GM10248 (cell line): ENCODE measurements at regions of chr4 and their contacts with region 1.

Region 1: GRCh38 chr4:127598656-127599055 is 34.1 kb upstream of the INTU start:
- DNase-seq: no peak
- CTCF ChIP-seq: no peak

Region 2: DNA sequence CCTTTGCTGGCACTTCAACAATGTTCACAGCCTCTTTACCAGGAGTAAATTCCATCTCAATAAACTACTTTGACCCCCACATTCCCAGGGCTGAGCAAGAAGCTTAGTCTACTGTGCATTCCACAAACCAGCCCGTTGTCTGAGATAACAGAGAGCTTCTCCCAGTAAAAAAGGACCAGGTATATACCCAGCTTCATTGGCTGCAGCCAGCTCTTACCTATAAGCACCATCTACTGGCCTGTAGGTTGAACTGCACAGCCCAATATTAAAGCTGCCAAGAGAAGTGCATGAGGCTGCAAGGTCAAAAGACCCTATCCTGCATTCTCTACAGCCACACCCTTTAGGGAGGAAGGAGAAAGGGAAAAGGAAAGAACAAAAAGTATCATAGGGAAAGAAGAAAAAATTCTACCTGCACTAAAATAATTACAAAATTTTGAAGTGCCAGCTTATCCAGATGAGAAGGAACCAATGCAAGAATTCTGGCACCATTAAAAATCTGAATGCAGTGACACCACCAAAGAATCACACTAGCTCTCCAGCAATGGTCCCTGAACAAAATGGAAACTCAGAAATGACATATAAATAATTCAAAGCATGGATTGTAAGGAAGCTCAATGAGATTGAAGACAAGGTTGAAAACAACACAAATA is 11.6 kb before region 1 on chr4:
- CTCF ChIA-PET with region 1: interaction called, 11 read pairs
- POLR2A ChIA-PET with region 1: no interaction called
- DNase-seq: peak; percentile 43
- CTCF ChIP-seq: peak; percentile 58

Region 3: GRCh38 chr4:127778102-127778501 is 179.4 kb after region 1 on chr4:
- CTCF ChIA-PET with region 1: no interaction called
- POLR2A ChIA-PET with region 1: no interaction called
- DNase-seq: no peak
- CTCF ChIP-seq: no peak

Region 4: DNA sequence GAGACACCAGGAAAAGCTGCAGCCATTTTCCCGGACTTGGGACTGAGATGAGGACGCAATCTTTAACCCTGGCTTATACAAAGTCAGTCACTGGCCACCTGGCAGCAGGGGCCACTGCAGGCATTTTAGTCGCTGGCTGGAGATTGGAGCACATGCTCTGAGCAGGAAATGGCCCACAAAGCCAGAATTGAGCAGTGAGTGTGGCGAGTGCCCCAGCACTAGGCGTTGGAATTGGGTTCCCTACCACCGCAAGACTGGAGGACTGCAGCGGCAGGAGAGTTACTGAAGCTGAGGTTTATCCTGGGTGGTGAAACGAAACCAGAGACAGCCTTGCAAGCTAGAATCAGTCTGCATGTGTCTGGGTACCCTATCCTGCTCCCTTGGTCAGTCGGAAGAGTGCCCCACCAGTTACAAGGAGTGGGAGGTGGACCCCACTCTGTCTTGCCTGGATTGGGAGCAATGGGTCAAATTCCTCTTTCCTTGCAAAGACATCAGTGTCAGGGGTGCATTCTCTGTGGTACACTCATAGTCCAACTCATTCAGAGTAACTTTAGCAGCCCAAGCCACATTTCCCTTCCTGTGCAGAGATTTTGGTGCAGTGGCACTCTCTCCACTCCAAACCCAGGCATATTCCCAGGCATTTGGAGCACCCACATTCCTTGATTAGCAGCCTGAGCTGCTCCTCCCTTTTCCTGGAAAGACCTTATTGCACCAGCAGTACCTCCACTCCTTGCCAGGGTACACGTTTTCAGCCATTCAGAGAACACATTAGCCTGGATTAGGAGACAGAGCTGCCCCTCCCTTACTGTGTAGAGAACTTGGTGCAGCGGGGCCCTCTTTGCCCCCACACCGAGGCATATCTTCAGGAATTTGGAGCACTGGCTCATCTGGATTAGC is 245.3 kb after region 1 on chr4:
- CTCF ChIA-PET with region 1: no interaction called
- POLR2A ChIA-PET with region 1: no interaction called
- DNase-seq: no peak
- CTCF ChIP-seq: no peak